ENCODE measurements at regions of chr3 and their contacts with region 1.

Region 1: GRCh38 chr3:42443819-42444436 is 33.5 kb upstream of the LYZL4 start:
- DNase-seq: peak; percentile 81
- ATAC-seq: peak; percentile 91
- H3K4me3 Mint-ChIP-seq: no peak overlapping the region
- H3K27ac Mint-ChIP-seq: no peak overlapping the region
- H3K4me1 Mint-ChIP-seq: no peaks in the 10 kb centered on the region
- H3K27me3 Mint-ChIP-seq: peaks cover 14% of the 10 kb centered on the region

Region 2: GRCh38 chr3:42118762-42119361 is 325.1 kb before region 1 on chr3:
- CTCF ChIA-PET with region 1: interaction called, 10 read pairs
- DNase-seq: peak; percentile 53
- ATAC-seq: peak; percentile 83
- H3K4me3 Mint-ChIP-seq: no peak overlapping the region
- H3K27ac Mint-ChIP-seq: peak overlapping the region; percentile 43
- H3K4me1 Mint-ChIP-seq: peaks cover 28% of the 10 kb centered on the region
- H3K27me3 Mint-ChIP-seq: no peaks in the 10 kb centered on the region

Region 3: DNA sequence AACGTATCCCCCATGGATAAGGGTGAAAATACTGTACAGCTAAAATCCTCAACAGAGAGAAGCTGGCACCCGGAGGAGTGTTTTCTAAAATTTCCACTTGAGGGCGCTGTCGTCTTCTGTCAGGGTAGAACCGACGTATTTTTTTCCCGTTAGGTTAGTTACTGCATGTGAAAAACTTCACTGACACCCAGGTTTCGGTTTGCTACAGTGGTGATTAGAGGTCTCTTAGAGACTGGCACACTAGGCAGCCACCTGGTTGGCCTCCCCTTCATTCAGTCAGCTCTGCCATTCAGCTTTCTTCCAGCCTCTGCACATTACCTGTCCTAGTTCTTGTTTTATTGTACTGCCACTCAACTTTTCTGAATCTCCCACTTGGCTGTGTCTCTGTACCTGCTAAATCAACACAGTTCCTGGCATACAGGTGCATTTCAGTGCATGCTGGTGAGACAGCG is 196.3 kb before region 1 on chr3:
- CTCF ChIA-PET with region 1: interaction called, 39 read pairs
- DNase-seq: peak; percentile 71
- ATAC-seq: peak; percentile 66
- H3K4me3 Mint-ChIP-seq: no peak overlapping the region
- H3K27ac Mint-ChIP-seq: no peak overlapping the region
- H3K4me1 Mint-ChIP-seq: peaks cover 3% of the 10 kb centered on the region
- H3K27me3 Mint-ChIP-seq: peaks cover 31% of the 10 kb centered on the region

Region 4: GRCh38 chr3:42336103-42336502 is 107.8 kb before region 1 on chr3:
- CTCF ChIA-PET with region 1: no interaction called
- DNase-seq: no peak
- ATAC-seq: no peak
- H3K4me3 Mint-ChIP-seq: no peak overlapping the region
- H3K27ac Mint-ChIP-seq: no peak overlapping the region
- H3K4me1 Mint-ChIP-seq: no peaks in the 10 kb centered on the region
- H3K27me3 Mint-ChIP-seq: peaks cover 4% of the 10 kb centered on the region

Region 5: DNA sequence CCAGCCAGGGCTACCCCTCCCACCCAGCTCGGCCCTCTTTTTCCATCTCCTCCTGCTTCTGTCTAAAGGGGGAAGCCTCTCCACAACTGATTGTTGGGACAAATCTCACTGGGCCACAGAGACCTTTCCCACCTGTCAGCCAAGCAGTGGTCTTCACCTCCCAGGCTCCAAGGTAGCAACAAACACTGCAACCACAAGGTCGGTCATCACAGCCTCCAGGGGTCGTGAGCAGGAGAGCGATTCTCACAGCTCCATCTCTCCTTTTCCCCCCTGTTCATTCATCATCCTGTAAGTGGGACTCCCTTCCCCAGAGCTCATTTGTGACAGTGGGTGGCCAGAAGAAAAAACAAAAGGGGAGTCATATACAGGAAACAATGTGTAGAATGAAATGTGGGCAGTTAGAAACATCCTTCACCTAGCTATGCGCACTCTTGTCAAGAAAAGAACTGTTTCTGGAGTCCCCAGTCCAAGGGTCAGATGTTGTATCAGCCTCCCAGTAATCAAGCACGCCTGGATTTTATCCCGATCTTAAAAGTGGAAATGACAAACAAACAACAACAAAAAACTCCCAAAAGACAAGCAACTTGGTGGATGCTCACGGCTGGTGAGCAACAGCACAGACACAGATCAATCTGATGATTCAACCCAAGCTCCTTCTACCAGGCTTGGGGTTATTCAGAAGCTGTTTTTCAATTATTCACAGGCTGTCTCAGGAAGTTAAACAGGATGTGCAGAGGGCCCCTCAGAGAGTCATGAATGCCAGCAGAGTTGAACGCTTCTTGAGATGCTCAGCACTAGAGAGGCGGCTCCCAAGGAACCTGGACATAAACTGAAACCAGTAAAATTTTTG is 55.9 kb before region 1 on chr3:
- CTCF ChIA-PET with region 1: no interaction called
- DNase-seq: peak; percentile 47
- ATAC-seq: peak; percentile 81
- H3K4me3 Mint-ChIP-seq: peak overlapping the region; percentile 0
- H3K27ac Mint-ChIP-seq: peak overlapping the region; percentile 77
- H3K4me1 Mint-ChIP-seq: peaks cover 18% of the 10 kb centered on the region
- H3K27me3 Mint-ChIP-seq: peaks cover 9% of the 10 kb centered on the region

Region 6: DNA sequence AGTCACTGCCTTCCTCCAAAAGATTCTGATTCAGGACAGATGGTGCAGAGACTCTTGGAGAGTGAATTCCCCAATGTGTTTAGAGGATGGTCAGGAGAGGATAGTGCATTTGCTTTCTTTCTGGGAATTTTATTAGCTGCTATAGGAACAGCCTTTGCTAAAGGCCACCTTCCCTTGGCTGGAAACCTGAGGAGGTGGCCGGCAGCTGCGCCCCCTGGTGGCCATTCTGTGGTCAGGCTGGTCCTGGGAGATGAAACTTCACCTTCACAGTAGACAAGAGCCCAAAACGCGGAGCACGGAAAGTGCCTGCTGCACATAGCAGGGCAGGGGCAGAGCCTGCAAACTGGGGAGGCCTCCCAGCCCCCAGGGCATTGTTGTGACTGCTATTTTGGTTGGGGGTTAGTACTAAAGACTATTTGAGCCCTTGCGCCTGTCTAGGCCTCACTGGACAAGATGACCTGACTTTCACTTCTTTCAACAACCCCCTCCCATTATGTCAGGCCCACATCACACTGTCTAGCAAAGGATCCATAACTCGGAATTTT is 103.5 kb after region 1 on chr3:
- CTCF ChIA-PET with region 1: no interaction called
- DNase-seq: peak; percentile 69
- ATAC-seq: peak; percentile 79
- H3K4me3 Mint-ChIP-seq: no peak overlapping the region
- H3K27ac Mint-ChIP-seq: no peak overlapping the region
- H3K4me1 Mint-ChIP-seq: peaks cover 2% of the 10 kb centered on the region
- H3K27me3 Mint-ChIP-seq: no peaks in the 10 kb centered on the region